SK-N-SH (cell line): ENCODE measurements at regions of chr4 and their contacts with region 1.

Region 1: GRCh38 chr4:107757864-107758476 is 37.9 kb upstream of the PAPSS1 start:
- DNase-seq: peak; percentile 9
- H3K4me3 ChIP-seq: no peak overlapping the region
- H3K27ac ChIP-seq: no peak overlapping the region
- H3K4me1 ChIP-seq: no peaks in the 10 kb centered on the region
- H3K27me3 ChIP-seq: no peaks in the 10 kb centered on the region; the same call in 1 of the 2 replicates
- CTCF ChIP-seq: peak; percentile 72
- EP300 ChIP-seq: no peak
- RAD21 ChIP-seq: peak; percentile 60

Region 2: DNA sequence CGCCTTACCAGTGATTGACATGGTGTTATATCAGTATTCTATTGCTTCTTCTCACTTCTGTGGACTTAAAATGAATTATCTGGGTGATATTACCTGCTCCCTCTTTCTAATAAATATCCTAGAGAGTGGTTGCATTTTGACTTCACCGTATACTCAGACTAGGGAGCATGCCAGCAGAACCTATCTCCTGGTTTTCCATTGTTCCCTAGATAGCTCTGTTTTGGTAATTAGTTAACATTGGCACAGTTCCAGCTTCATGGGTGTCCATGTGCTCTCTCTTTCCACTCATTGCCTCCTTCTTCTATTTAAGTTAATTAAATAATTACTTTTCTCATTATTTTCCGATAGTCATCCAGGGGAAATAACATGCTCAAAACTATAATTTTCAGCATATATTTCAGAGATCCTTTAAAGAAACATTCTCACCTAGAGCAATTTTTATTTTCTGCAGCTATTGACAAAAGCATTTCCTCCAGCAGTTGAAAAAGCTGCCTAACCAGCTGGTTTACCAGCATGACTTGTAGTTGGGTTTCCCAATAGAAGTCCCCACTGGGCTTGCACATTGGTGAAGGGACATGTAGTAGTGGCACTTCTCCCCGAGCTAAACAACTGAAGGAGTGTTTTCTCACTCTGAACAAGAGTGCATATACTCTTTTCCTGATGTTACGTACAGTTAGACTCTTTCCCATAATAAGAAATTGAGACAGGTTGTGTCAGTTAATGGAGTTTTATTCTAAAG is 10.1 kb before region 1 on chr4:
- CTCF ChIA-PET with region 1: interaction called, 10 read pairs
- POLR2A ChIA-PET with region 1: no interaction called
- DNase-seq: no peak
- H3K4me3 ChIP-seq: no peak overlapping the region
- H3K27ac ChIP-seq: no peak overlapping the region
- H3K4me1 ChIP-seq: no peaks in the 10 kb centered on the region
- H3K27me3 ChIP-seq: peaks cover 16% of the 10 kb centered on the region; the same call in 1 of the 2 replicates
- CTCF ChIP-seq: no peak
- EP300 ChIP-seq: no peak
- RAD21 ChIP-seq: no peak

Region 3: DNA sequence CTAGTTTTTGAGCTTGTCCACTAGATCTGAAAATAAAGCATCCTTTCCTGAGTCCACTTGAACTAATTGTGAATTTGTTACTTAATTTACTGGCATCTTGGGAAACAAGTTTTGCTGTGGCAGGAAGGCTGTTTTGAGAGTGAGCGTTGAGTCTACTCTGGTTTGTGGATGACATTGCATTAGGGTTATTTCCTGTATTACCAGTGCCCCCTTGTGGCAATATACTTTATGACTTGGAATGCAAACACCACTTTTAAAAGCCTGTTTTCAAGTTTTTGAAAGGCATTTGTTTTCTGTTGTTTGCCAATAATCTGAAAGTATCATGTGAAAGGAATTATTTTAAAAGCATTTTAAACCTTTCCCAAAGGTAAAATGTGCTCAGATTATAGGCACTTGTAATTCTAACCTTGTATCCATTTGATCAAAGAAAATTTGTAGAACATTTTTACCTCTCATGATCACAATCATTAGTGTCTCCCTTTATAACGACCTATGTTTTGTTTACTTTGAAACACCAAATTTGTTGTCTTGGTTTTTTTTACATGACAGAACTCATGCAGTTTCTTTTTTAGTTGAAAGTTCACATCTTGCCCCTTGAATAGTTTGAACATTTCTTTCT is 155.4 kb after region 1 on chr4:
- CTCF ChIA-PET with region 1: interaction called, 55 read pairs
- POLR2A ChIA-PET with region 1: no interaction called
- DNase-seq: peak; percentile 36
- H3K4me3 ChIP-seq: no peak overlapping the region; a peak in 1 of 4 replicates
- H3K27ac ChIP-seq: no peak overlapping the region
- H3K4me1 ChIP-seq: peaks cover 0 to 2% of the 10 kb centered on the region in 2 experiments; a peak in 2 of 4 replicates
- H3K27me3 ChIP-seq: no peaks in the 10 kb centered on the region
- CTCF ChIP-seq: peak; percentile 85
- EP300 ChIP-seq: no peak
- RAD21 ChIP-seq: peak; percentile 90

Region 4: DNA sequence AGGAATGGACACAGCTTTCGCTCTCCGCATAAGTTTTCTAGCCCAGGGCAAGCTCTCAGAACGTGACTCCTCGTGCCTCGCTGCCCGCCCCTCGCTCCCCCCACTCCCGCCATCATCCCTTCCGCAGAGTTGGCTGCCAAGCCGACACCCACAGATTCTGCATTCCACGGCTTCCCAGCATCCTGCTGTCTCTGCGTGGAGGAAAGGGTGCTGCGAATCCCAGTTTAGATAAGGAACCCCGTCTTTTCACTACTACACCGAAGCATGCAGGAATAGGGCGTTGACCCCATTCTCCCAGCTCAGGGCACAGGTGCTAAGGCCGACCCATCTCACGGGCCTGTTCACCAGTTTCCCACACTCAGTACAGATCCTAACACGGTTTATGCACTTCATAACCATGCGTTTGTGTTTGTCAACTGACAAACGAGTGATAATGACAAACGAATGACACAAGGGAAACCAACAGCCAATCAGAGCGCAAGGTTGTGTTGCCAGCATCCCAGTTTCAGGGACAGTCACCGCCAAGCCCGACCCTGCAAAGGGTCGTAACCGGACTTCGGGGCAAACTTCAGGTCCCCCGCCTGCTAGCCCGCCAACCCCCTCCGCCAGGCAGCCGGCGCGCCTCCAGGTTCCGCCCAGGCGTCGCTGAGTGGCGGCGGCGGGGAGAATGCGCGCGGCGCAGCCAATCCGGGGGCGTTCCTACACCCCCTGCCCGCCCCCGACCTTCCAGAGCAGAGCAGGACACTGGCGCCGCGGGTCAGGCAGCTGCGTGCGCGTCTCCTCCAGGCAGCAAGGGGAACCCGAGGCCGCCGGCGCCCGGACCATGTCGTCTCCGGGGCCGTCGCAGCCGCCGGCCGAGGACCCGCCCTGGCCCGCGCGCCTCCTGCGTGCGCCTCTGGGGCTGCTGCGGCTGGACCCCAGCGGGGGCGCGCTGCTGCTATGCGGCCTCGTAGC is 173.1 kb after region 1 on chr4 and contains the start of gene CYP2U1:
- CTCF ChIA-PET with region 1: interaction called, 10 read pairs
- POLR2A ChIA-PET with region 1: no interaction called
- DNase-seq: peak; percentile 95
- H3K4me3 ChIP-seq: peak within 1 kb of the TSS; percentile 83 to 87
- H3K27ac ChIP-seq: peak within 1 kb of the TSS in 1 of 2 experiments; percentile 82; a peak in 2 of 4 replicates
- H3K4me1 ChIP-seq: peaks cover 0 to 14% of the 10 kb centered on the region in 2 experiments; a peak in 2 of 4 replicates
- H3K27me3 ChIP-seq: no peaks in the 10 kb centered on the region
- CTCF ChIP-seq: no peak
- EP300 ChIP-seq: no peak
- RAD21 ChIP-seq: no peak
- polyA plus RNA-seq, gene CYP2U1: 2.0 and 2.8 TPM in 2 replicates